PC-9 (cell line): ENCODE measurements at regions of chr19 and their contacts with region 1.

Region 1: GRCh38 chr19:43519436-43520088 is 7.4 kb downstream of the ETHE1 start:
- DNase-seq: peak; percentile 86 to 97
- H3K4me3 ChIP-seq: no peak overlapping the region
- H3K27ac ChIP-seq: peak overlapping the region; percentile 95
- H3K4me1 ChIP-seq: peaks cover 40% of the 10 kb centered on the region
- H3K27me3 ChIP-seq: no peaks in the 10 kb centered on the region
- CTCF ChIP-seq: peak; percentile 94

Region 2: GRCh38 chr19:41837981-41838708 is 1681.4 kb before region 1 on chr19:
- CTCF ChIA-PET with region 1: interaction called, 14 read pairs
- POLR2A ChIA-PET with region 1: no interaction called
- intact Hi-C with region 1: no loop called
- DNase-seq: no peak
- H3K4me3 ChIP-seq: no peak overlapping the region
- H3K27ac ChIP-seq: no peak overlapping the region
- H3K4me1 ChIP-seq: no peaks in the 10 kb centered on the region
- H3K27me3 ChIP-seq: peaks cover 20% of the 10 kb centered on the region; the same call in 1 of the 2 replicates
- CTCF ChIP-seq: no peak

Region 3: GRCh38 chr19:43433358-43433673 is 86.2 kb before region 1 on chr19:
- CTCF ChIA-PET with region 1: interaction called, 6 read pairs
- POLR2A ChIA-PET with region 1: interaction called, 8 read pairs
- intact Hi-C with region 1: loop called (anchors 1 kb)
- DNase-seq: no peak
- H3K4me3 ChIP-seq: no peak overlapping the region
- H3K27ac ChIP-seq: no peak overlapping the region
- H3K4me1 ChIP-seq: peaks cover 26% of the 10 kb centered on the region
- H3K27me3 ChIP-seq: no peaks in the 10 kb centered on the region
- CTCF ChIP-seq: no peak

Region 4: GRCh38 chr19:43463381-43464136 is 56.0 kb before region 1 on chr19:
- CTCF ChIA-PET with region 1: interaction called, 6 read pairs
- POLR2A ChIA-PET with region 1: interaction called, 8 read pairs
- intact Hi-C with region 1: loop called (anchors 5 kb)
- DNase-seq: peak; percentile 80 to 91
- H3K4me3 ChIP-seq: peak overlapping the region; percentile 80
- H3K27ac ChIP-seq: peak overlapping the region; percentile 63
- H3K4me1 ChIP-seq: peaks cover 32% of the 10 kb centered on the region
- H3K27me3 ChIP-seq: no peaks in the 10 kb centered on the region
- CTCF ChIP-seq: no peak

Region 5: DNA sequence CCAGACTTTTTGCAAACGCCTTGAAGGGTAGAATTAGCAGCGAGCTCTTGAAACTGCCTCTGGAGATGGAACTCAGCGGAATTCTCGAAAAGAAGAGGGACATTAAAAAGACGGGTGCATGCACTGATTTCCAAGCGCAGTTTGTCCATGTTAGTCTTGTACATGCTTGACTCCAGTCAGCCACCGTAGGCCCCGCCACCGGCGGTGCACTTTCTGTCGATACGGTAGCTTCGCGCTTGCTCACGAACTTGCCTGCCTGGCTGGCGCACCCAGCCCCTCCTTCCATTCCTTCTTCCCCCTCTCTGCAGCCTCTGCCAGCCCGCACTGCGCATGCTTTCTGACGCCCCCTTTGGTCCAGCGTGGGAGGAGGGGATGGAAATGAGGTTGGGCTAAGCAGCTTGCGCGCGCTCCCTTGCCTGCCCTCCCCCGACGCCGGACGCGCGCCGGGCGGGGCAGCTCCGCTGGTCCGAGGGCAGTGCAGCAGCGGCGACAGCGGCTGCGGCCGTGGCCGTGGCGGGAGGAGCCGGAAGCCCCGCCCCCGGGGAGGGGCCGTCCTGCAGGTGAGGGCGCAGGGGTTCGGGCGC is 13.5 kb after region 1 on chr19 and contains the start of gene ZNF575:
- CTCF ChIA-PET with region 1: interaction called, 12 read pairs
- POLR2A ChIA-PET with region 1: interaction called, 6 read pairs
- intact Hi-C with region 1: no loop called
- DNase-seq: peak; percentile 81 to 95
- H3K4me3 ChIP-seq: peak within 1 kb of the TSS; percentile 63
- H3K27ac ChIP-seq: peak within 1 kb of the TSS; percentile 54
- H3K4me1 ChIP-seq: peaks cover 25% of the 10 kb centered on the region
- H3K27me3 ChIP-seq: no peaks in the 10 kb centered on the region
- CTCF ChIP-seq: no peak
- total RNA-seq, gene ZNF575: 5.2 and 6.5 TPM in 2 replicates